ENCODE measurements at regions of chr3 and their contacts with region 1.

Region 1: DNA sequence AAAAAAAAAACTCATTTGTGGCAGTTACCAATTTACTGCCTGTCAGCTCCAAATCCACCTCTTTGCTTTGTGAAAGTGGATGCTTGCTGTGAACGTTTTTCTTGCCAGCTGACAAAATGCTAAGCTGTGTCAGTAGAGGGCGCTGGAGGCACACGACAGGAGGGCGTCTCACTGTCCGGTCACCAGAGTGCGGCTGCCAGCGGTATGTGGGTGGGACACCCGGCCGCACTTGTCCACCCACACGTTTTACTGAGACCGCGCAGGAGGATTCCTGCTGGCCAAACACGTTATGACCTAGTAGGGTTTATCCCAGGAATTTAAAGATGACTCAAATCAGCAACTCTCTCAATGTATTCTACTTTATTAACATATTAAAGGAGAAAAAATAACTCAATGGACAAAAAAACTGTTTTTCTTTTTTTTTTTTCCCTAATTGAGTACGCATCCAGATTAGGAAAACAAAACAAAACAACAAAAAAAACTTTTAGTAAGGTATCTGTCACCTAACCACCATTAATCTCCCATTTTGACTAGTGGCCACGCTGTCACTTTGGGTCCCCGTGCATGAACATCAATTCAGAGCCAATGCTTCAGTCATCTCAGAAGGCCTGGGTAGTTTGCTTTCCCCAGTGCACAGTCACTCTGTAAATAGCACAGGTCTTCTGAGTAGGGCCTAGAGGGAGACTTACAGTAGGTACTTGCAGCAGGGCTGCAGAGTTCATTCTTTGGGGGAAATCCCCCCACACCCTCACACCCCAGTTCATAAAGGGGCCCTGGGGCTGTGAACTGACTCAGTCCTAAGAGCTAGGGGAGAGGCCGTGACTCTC is 43.8 kb upstream of the RPL35A start:
- DNase-seq: peak; percentile 70
- H3K4me3 Mint-ChIP-seq: no peak overlapping the region
- H3K27ac Mint-ChIP-seq: peak overlapping the region; percentile 83
- H3K4me1 Mint-ChIP-seq: peaks cover 20% of the 10 kb centered on the region
- H3K27me3 Mint-ChIP-seq: no peaks in the 10 kb centered on the region

Region 2: GRCh38 chr3:197878427-197878826 is 27.8 kb before region 1 on chr3:
- intact Hi-C with region 1: loop called (anchors 1 kb)
- DNase-seq: peak; percentile 34
- H3K4me3 Mint-ChIP-seq: no peak overlapping the region
- H3K27ac Mint-ChIP-seq: peak overlapping the region; percentile 92
- H3K4me1 Mint-ChIP-seq: peaks cover 29% of the 10 kb centered on the region
- H3K27me3 Mint-ChIP-seq: no peaks in the 10 kb centered on the region

Region 3: GRCh38 chr3:197942956-197943556 is 36.8 kb after region 1 on chr3:
- intact Hi-C with region 1: loop called (anchors 1 kb)
- DNase-seq: no peak
- H3K4me3 Mint-ChIP-seq: no peak overlapping the region
- H3K27ac Mint-ChIP-seq: no peak overlapping the region
- H3K4me1 Mint-ChIP-seq: peaks cover 6% of the 10 kb centered on the region
- H3K27me3 Mint-ChIP-seq: no peaks in the 10 kb centered on the region

Region 4: DNA sequence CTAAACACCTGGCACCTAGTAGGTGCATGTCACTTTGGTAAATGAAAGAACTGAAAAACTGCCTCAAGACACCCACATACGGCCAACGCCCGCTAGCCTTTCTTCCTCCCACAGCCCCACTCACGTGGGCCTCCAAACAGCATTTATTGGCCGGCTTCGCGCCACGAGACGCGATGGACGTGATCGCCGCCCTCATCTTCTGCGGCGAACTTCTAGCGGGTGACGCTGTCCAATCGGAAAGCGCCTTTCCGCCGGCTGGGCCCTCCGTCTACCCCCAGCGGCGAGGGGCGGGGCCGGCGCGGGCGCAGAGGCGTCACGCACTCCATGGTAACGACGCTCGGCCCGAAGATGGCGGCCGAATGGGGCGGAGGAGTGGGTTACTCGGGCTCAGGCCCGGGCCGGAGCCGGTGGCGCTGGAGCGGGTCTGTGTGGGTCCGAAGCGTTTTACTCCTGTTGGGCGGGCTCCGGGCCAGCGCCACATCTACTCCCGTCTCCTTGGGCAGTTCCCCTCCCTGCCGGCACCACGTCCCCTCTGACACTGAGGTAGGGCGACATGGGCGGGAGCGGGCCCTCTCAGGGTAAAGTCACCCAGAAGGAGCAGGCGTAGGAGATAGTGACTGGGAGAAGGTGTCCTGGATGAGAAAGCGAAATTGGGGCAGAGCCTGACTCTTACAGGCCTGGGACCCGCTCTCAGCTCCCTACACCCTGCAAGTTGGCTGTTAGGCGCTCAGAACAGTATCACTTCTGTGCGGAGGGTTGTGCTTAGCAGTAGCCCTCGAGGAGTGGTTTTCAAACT is 53.9 kb after region 1 on chr3 and contains the start of gene LMLN:
- intact Hi-C with region 1: loop called (anchors 1 kb)
- DNase-seq: peak; percentile 95
- H3K4me3 Mint-ChIP-seq: peak within 1 kb of the TSS; percentile 88
- H3K27ac Mint-ChIP-seq: peak within 1 kb of the TSS; percentile 92
- H3K4me1 Mint-ChIP-seq: peaks cover 39% of the 10 kb centered on the region
- H3K27me3 Mint-ChIP-seq: peaks cover 2% of the 10 kb centered on the region
- total RNA-seq, gene LMLN: 4.3 and 4.4 TPM in 2 replicates

Region 5: DNA sequence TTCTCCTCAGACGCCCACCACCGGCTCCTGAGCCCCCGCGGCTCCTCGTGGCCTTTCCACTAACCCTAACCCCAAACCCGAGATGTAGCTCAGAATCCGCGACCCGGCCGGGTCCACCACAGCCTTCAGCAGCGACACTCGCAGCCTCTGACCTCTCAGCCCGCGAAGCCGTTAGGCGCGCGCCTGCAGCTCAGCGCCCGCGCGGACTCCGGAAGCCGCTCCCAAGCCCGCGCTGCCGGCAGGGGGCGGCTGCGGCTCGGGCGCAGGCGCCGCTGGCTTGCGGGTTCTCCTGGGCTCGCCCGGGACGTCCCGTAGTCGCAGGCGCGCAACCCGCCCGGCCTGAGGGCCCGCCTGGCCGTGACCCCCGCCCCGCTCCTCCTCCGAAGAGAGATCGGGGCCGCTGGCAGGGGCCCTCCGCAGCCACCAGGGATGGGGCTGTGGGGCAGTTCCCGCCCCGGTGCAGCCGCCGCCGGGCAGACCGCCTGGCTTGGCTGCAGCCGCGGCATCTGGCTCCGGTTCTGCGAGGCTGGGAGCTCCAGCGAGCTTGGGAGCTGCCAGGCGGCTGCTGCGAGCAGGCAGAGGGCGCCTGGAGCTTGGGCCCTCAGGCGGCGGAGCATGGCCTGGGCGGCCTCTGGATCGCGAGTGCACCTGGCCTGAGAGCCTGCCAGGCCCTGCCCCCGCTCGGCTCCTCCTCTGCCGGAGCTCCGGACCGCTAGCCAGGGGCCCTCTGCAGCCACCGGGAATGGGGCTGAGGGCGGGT is 174.5 kb after region 1 on chr3:
- intact Hi-C with region 1: loop called (anchors 1 kb)
- DNase-seq: peak; percentile 79
- H3K4me3 Mint-ChIP-seq: peak overlapping the region; percentile 85
- H3K27ac Mint-ChIP-seq: peak overlapping the region; percentile 83
- H3K4me1 Mint-ChIP-seq: peaks cover 13% of the 10 kb centered on the region
- H3K27me3 Mint-ChIP-seq: peaks cover 37% of the 10 kb centered on the region